OCI-LY7 (cell line): ENCODE measurements at regions of chr3 and their contacts with region 1.

Region 1: GRCh38 chr3:146065573-146066006 is 95.4 kb downstream of the PLOD2 start:
- DNase-seq: peak; percentile 44
- H3K4me3 ChIP-seq: no peak overlapping the region
- H3K27ac ChIP-seq: no peak overlapping the region
- H3K4me1 ChIP-seq: no peaks in the 10 kb centered on the region
- CTCF ChIP-seq: peak; percentile 95

Region 2: GRCh38 chr3:145776782-145777408 is 288.7 kb before region 1 on chr3:
- CTCF ChIA-PET with region 1: no interaction called
- POLR2A ChIA-PET with region 1: no interaction called
- intact Hi-C with region 1: no loop called
- DNase-seq: peak; percentile 18
- H3K4me3 ChIP-seq: no peak overlapping the region
- H3K27ac ChIP-seq: no peak overlapping the region
- H3K4me1 ChIP-seq: no peaks in the 10 kb centered on the region
- CTCF ChIP-seq: peak; percentile 76

Region 3: DNA sequence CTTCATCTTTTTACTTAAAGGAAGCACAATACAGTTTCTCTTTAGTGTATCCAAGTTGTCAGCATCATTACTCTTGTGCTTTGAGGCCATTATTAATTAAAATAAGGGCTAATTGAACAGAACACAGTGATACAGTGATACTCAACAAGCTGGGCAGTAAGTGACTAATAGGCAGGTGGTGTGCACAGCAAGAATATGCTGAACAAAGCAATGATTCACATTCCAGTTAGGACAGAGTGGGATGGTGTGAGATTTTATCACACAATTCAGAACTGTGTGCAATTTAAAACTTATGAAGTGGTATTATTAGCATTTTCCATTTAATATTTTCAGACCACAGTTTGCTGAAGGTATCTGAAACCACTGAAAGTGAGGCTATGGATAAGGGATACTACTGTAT is 21.5 kb before region 1 on chr3:
- CTCF ChIA-PET with region 1: no interaction called
- POLR2A ChIA-PET with region 1: no interaction called
- intact Hi-C with region 1: no loop called
- DNase-seq: no peak
- H3K4me3 ChIP-seq: no peak overlapping the region
- H3K27ac ChIP-seq: no peak overlapping the region
- H3K4me1 ChIP-seq: no peaks in the 10 kb centered on the region
- CTCF ChIP-seq: no peak

Region 4: GRCh38 chr3:146189519-146190173 is 124.1 kb after region 1 on chr3:
- CTCF ChIA-PET with region 1: no interaction called
- POLR2A ChIA-PET with region 1: no interaction called
- intact Hi-C with region 1: loop called (anchors 10 kb)
- DNase-seq: peak; percentile 56
- H3K4me3 ChIP-seq: no peak overlapping the region
- H3K27ac ChIP-seq: no peak overlapping the region
- H3K4me1 ChIP-seq: no peaks in the 10 kb centered on the region
- CTCF ChIP-seq: peak; percentile 83